Brain microvascular endothelial cell (primary cell): ENCODE measurements at regions of chr15 and their contacts with region 1.

Region 1: GRCh38 chr15:44215594-44215993 is 20.5 kb upstream of the FRMD5 start:
- DNase-seq: peak; percentile 74
- H3K4me3 ChIP-seq: no peak overlapping the region
- H3K27ac ChIP-seq: no peak overlapping the region
- H3K27me3 ChIP-seq: no peaks in the 10 kb centered on the region
- CTCF ChIP-seq: no peak

Region 2: GRCh38 chr15:43903864-43904290 is 311.7 kb before region 1 on chr15:
- in situ Hi-C with region 1: loop called (anchors 25 kb)
- DNase-seq: peak; percentile 52
- H3K4me3 ChIP-seq: no peak overlapping the region
- H3K27ac ChIP-seq: no peak overlapping the region
- H3K27me3 ChIP-seq: no peaks in the 10 kb centered on the region
- CTCF ChIP-seq: peak; percentile 86